ENCODE measurements at regions of chr3 and their contacts with region 1.

Region 1: GRCh38 chr3:54891548-54892120 is 36.2 kb downstream of the LRTM1 start:
- ATAC-seq: peak; percentile 96 to 100 (median 99)
- H3K4me3 ChIP-seq: no peak overlapping the region
- H3K27ac ChIP-seq: no peak overlapping the region
- H3K4me1 ChIP-seq: peaks cover 2 to 11% of the 10 kb centered on the region in 2 donors

Region 2: DNA sequence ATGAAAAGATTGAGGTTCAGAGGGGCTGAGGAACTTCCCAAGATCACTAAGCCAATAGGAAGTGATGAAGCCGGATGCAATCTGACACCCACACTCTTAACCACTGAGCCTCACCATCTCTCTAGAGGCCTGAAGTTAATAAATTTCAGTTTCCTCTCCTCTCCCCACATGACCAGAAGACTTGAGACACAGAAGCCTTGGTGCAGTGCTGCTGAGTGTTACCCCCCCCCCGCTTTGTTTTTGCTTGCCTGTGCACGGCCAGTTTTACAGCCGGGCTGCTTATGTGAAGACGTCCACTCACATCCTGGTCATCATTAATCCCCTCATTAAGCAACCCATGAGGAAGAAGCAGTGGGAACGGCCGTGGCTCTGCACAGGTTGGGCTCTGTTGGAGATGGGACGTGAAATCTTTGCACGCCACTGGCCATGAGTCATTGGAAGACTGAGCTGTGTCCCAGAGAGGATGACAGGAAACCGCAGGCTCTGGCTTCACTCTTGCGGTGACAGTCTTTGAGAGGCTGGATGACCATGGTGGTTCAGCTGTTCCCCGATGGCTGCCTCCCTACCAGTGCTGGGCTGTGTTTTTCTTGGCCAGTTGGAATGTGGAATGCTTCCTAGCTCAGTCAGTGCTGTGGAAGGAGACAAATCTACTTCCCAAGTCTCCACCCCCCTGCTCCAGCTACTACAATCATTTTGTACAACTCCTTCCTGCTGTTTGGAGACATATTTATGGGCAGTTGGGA is 268.8 kb after region 1 on chr3:
- in situ Hi-C with region 1: loop called in 1 of 9 experiments (anchors 25 kb)
- ATAC-seq: peak in 3 of 8 experiments; percentile 49 to 96 (median 91)
- H3K4me3 ChIP-seq: no peak overlapping the region
- H3K27ac ChIP-seq: no peak overlapping the region
- H3K4me1 ChIP-seq: no peaks in the 10 kb centered on the region

Measured in motor neuron (in vitro differentiated cells).